Endothelial cell of umbilical vein (primary cell): ENCODE measurements at regions of chr11 and their contacts with region 1.

Region 1: GRCh38 chr11:62542750-62543567 is 3.6 kb downstream of the AHNAK start:
- DNase-seq: peak; percentile 75
- H3K4me3 ChIP-seq: peak overlapping the region in 2 of 3 experiments; percentile 53 to 55
- H3K27ac ChIP-seq: peak overlapping the region; percentile 12
- H3K4me1 ChIP-seq: peaks cover 64% of the 10 kb centered on the region
- H3K27me3 ChIP-seq: no peaks in the 10 kb centered on the region
- CTCF ChIP-seq: peak; percentile 98 to 100
- POLR2A ChIP-seq: no peak

Region 2: DNA sequence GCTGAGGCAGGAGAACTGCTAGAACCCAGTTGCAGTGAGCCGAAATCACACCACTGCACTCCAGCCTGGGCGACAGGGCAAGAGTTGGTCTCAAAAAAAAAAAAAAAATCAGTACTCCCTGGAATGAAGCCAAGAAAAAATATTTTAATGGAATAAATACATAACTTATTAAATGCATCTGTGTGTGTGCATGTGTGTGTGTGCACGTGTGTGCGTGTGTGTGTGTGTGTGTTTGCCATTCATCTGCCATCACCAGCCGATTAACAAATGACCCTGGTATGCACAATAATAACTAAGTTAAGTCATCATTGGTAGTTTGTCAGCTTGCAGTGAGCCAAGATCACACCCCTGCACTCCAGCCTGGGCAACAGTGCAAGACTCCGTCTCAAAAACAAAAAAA is 159.1 kb before region 1 on chr11:
- CTCF ChIA-PET with region 1: no interaction called
- POLR2A ChIA-PET with region 1: no interaction called
- dilution Hi-C with region 1: no loop called
- intact Hi-C with region 1: loop called (anchors 5 kb)
- DNase-seq: no peak
- H3K4me3 ChIP-seq: no peak overlapping the region
- H3K27ac ChIP-seq: no peak overlapping the region
- H3K4me1 ChIP-seq: no peaks in the 10 kb centered on the region
- H3K27me3 ChIP-seq: no peaks in the 10 kb centered on the region
- CTCF ChIP-seq: no peak
- POLR2A ChIP-seq: no peak

Region 3: GRCh38 chr11:62435846-62436660 is 106.9 kb before region 1 on chr11:
- CTCF ChIA-PET with region 1: interaction called, 28 read pairs
- POLR2A ChIA-PET with region 1: no interaction called
- dilution Hi-C with region 1: no loop called
- intact Hi-C with region 1: no loop called
- DNase-seq: no peak
- H3K4me3 ChIP-seq: no peak overlapping the region
- H3K27ac ChIP-seq: no peak overlapping the region
- H3K4me1 ChIP-seq: peaks cover 9% of the 10 kb centered on the region
- H3K27me3 ChIP-seq: no peaks in the 10 kb centered on the region
- CTCF ChIP-seq: no peak
- POLR2A ChIP-seq: no peak

Region 4: GRCh38 chr11:62487738-62488551 is 55.0 kb before region 1 on chr11:
- CTCF ChIA-PET with region 1: interaction called, 14 read pairs
- POLR2A ChIA-PET with region 1: no interaction called
- dilution Hi-C with region 1: no loop called
- intact Hi-C with region 1: no loop called
- DNase-seq: peak; percentile 27
- H3K4me3 ChIP-seq: no peak overlapping the region
- H3K27ac ChIP-seq: no peak overlapping the region
- H3K4me1 ChIP-seq: no peaks in the 10 kb centered on the region
- H3K27me3 ChIP-seq: no peaks in the 10 kb centered on the region
- CTCF ChIP-seq: no peak
- POLR2A ChIP-seq: no peak

Region 5: GRCh38 chr11:62514151-62514550 is 28.8 kb before region 1 on chr11:
- CTCF ChIA-PET with region 1: interaction called, 16 read pairs
- POLR2A ChIA-PET with region 1: interaction called, 5 read pairs
- dilution Hi-C with region 1: no loop called
- intact Hi-C with region 1: loop called (anchors 2 kb)
- DNase-seq: no peak
- H3K4me3 ChIP-seq: no peak overlapping the region
- H3K27ac ChIP-seq: no peak overlapping the region
- H3K4me1 ChIP-seq: no peaks in the 10 kb centered on the region
- H3K27me3 ChIP-seq: no peaks in the 10 kb centered on the region
- CTCF ChIP-seq: no peak
- POLR2A ChIP-seq: no peak

Region 6: GRCh38 chr11:62573592-62574362 is 30.8 kb after region 1 on chr11 and contains the start of gene EEF1G:
- CTCF ChIA-PET with region 1: interaction called, 14 read pairs
- POLR2A ChIA-PET with region 1: interaction called, 4 read pairs
- dilution Hi-C with region 1: no loop called
- intact Hi-C with region 1: no loop called
- DNase-seq: peak; percentile 100
- H3K4me3 ChIP-seq: peak within 1 kb of the TSS; percentile 51 to 85 (median 70)
- H3K27ac ChIP-seq: peak within 1 kb of the TSS; percentile 99
- H3K4me1 ChIP-seq: peaks cover 59% of the 10 kb centered on the region
- H3K27me3 ChIP-seq: no peaks in the 10 kb centered on the region
- CTCF ChIP-seq: no peak
- POLR2A ChIP-seq: peak; percentile 96
- total RNA-seq, gene EEF1G: 1,341 and 1,345 TPM in 2 replicates

Region 7: DNA sequence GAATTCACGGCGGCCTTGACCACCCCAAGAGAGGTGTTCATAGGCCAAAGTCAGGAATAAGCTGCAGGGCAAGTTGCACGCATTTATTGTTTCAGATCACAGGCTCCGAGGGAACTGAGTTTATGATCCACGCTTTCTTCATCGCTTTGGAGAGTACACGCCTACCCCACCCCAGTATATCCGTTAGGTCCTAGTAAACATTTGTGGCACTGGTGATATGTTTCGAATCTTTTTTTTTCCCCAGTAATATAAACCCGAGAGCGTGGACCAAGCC is 102.7 kb after region 1 on chr11:
- CTCF ChIA-PET with region 1: no interaction called
- POLR2A ChIA-PET with region 1: no interaction called
- dilution Hi-C with region 1: no loop called
- intact Hi-C with region 1: no loop called
- DNase-seq: no peak
- H3K4me3 ChIP-seq: peak overlapping the region; percentile 62 to 87 (median 65)
- H3K27ac ChIP-seq: peak overlapping the region; percentile 80
- H3K4me1 ChIP-seq: peaks cover 11% of the 10 kb centered on the region
- H3K27me3 ChIP-seq: no peaks in the 10 kb centered on the region
- CTCF ChIP-seq: no peak
- POLR2A ChIP-seq: no peak